AG04450 (cell line): ENCODE measurements at regions of chr14 and their contacts with region 1.

Region 1: GRCh38 chr14:103243764-103244737 is 90.0 kb upstream of the EIF5 start:
- DNase-seq: no peak
- H3K4me3 ChIP-seq: no peak overlapping the region
- H3K27ac ChIP-seq: no peak overlapping the region
- H3K27me3 ChIP-seq: peaks cover 5% of the 10 kb centered on the region
- CTCF ChIP-seq: no peak

Region 2: DNA sequence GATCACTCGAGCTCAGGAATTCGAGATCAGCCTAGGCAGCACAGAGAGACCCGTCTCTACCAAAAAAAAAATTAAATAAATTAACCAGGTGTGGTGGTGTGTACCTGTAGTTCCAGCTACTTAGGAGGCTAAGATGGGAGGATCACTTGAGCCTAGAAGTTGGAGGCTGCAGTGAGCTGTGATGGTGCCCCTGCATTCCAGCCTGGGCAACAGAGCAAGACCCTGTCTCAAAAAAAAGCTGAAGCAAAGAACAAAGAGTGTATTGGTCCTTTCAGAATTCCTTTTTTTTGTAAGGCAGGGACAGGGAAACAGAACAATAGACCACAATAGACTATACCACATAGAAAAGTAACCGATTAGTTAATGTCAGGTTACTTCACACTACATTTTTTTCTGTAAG is 188.6 kb after region 1 on chr14:
- CTCF ChIA-PET with region 1: no interaction called
- POLR2A ChIA-PET with region 1: interaction called, 10 read pairs
- DNase-seq: no peak
- H3K4me3 ChIP-seq: no peak overlapping the region
- H3K27ac ChIP-seq: no peak overlapping the region
- H3K27me3 ChIP-seq: no peaks in the 10 kb centered on the region
- CTCF ChIP-seq: no peak